ENCODE measurements at regions of chr11 and their contacts with region 1.

Region 1: GRCh38 chr11:23010790-23011335 is 150.6 kb upstream of the CCDC179 start:
- DNase-seq: no peak
- H3K4me3 Mint-ChIP-seq: no peak overlapping the region
- H3K27ac Mint-ChIP-seq: no peak overlapping the region
- H3K4me1 Mint-ChIP-seq: no peaks in the 10 kb centered on the region
- H3K27me3 Mint-ChIP-seq: no peaks in the 10 kb centered on the region
- CTCF ChIP-seq: no peak

Region 2: GRCh38 chr11:23021287-23021863 is 10.5 kb after region 1 on chr11:
- CTCF ChIA-PET with region 1: interaction called, 10 read pairs
- POLR2A ChIA-PET with region 1: no interaction called
- intact Hi-C with region 1: no loop called
- DNase-seq: peak; percentile 9
- H3K4me3 Mint-ChIP-seq: no peak overlapping the region
- H3K27ac Mint-ChIP-seq: no peak overlapping the region
- H3K4me1 Mint-ChIP-seq: no peaks in the 10 kb centered on the region
- H3K27me3 Mint-ChIP-seq: no peaks in the 10 kb centered on the region
- CTCF ChIP-seq: peak; percentile 45

Region 3: GRCh38 chr11:23097891-23098290 is 87.0 kb after region 1 on chr11:
- CTCF ChIA-PET with region 1: no interaction called
- POLR2A ChIA-PET with region 1: no interaction called
- intact Hi-C with region 1: no loop called
- DNase-seq: no peak
- H3K4me3 Mint-ChIP-seq: no peak overlapping the region
- H3K27ac Mint-ChIP-seq: no peak overlapping the region
- H3K4me1 Mint-ChIP-seq: no peaks in the 10 kb centered on the region
- H3K27me3 Mint-ChIP-seq: peaks cover 12% of the 10 kb centered on the region
- CTCF ChIP-seq: no peak